BJ (cell line): ENCODE measurements at regions of chr2 and their contacts with region 1.

Region 1: DNA sequence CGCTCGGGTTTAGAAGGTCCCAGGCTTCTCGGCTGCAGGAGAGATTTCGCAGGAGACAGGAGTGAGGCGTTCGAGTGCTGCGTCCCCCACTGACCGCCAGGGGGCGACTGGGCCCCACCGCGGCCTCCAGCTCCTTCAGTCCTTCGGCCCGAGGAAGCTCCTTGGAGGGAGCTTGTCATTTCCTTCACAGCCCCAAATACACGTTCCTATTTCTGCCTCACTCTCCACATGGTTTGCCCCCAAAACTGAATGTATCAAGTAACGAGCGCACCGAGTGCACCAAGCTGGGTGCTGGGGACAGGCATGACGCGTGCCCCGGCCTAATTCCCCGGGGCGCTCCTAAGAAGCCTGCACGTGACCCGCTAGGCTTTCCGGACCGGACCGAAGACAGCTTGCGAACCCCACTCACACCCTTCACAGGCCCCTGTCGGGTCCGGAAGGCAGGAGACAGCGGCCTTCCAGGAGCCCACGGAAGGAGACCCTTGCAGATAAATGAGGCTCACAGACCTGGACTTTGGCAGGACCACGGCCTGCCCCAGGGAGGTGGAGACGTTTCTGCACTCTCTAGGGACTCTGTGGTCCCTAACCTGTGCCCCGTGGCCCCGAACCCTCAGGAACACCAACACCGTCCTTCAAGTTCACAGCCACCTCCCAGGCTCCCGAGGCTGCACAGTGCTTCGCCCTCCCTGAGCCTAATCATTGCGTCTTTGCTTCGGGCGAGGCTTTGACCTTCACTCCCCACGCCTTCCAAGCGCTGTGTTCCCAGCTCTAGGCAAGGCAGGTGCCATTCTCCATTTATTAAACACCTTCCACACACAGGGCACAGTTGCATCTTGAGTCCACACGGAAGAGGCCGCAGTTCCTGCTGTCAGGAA is 13.0 kb upstream of the FAHD2A start:
- DNase-seq: no peak
- H3K4me3 ChIP-seq: no peak overlapping the region
- H3K27me3 ChIP-seq: no peaks in the 10 kb centered on the region; the same call in 1 of the 2 replicates
- CTCF ChIP-seq: peak; percentile 99

Region 2: GRCh38 chr2:95115418-95115817 is 274.1 kb before region 1 on chr2:
- CTCF ChIA-PET with region 1: no interaction called
- POLR2A ChIA-PET with region 1: no interaction called
- DNase-seq: peak; percentile 7
- H3K4me3 ChIP-seq: no peak overlapping the region
- H3K27me3 ChIP-seq: no peaks in the 10 kb centered on the region
- CTCF ChIP-seq: peak; percentile 86

Region 3: DNA sequence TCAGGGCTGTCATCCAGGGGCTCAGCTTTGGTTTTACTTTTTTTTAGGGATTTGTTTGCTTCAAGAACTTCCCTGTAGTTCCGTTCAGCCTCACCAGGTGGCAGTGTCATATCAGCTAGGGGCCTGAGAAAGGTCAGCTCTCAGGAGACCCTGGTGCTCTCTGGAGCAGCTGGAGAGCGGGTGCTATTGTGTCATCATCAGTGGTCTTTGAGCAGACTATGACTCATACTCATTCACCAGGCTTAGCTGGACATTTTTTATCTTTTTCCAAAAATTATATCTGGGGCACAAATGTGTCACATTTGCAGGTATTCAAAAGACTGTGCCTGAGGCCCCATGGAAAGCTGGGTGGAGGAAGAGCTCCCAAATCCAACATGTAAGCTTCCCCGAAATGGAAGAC is 157.8 kb before region 1 on chr2:
- CTCF ChIA-PET with region 1: interaction called, 28 read pairs
- POLR2A ChIA-PET with region 1: no interaction called
- DNase-seq: peak; percentile 31
- H3K4me3 ChIP-seq: no peak overlapping the region
- H3K27me3 ChIP-seq: 0 out of 2 replicates have a peak, but pooled peaks cover 2% of the 10 kb centered on the region
- CTCF ChIP-seq: peak; percentile 94

Region 4: GRCh38 chr2:95359031-95359430 is 30.5 kb before region 1 on chr2:
- CTCF ChIA-PET with region 1: interaction called, 11 read pairs
- POLR2A ChIA-PET with region 1: no interaction called
- DNase-seq: peak; percentile 33
- H3K4me3 ChIP-seq: no peak overlapping the region
- H3K27me3 ChIP-seq: no peaks in the 10 kb centered on the region
- CTCF ChIP-seq: no peak

Region 5: DNA sequence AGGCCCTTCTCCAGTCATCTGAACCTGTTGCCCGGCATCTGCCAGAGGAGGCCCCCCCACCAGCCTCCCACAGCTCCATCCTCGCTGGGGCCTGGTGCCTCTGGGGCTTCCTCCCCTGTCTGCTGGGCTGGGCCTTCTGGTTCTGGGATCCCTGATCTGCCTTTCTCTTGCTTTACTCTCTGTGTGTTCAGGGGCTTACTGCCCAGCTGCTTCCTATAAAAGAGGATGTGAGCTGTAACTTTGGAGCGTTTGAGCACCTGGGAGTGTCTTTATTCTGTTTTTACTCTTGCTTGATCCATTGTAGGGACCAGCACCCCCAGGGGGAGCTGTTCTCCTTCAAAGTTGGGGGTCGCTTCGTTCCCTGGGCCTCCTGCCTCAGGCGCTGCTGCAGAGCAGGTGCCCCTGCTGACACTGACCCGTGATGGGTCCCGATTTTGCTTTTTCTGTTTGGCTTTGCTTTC is 10.1 kb before region 1 on chr2:
- CTCF ChIA-PET with region 1: interaction called, 18 read pairs
- POLR2A ChIA-PET with region 1: no interaction called
- DNase-seq: no peak
- H3K4me3 ChIP-seq: no peak overlapping the region
- H3K27me3 ChIP-seq: no peaks in the 10 kb centered on the region
- CTCF ChIP-seq: peak; percentile 36

Region 6: GRCh38 chr2:95728878-95729596 is 339.6 kb after region 1 on chr2:
- CTCF ChIA-PET with region 1: interaction called, 41 read pairs
- POLR2A ChIA-PET with region 1: no interaction called
- DNase-seq: peak; percentile 55
- H3K4me3 ChIP-seq: no peak overlapping the region
- H3K27me3 ChIP-seq: no peaks in the 10 kb centered on the region; the same call in 1 of the 2 replicates
- CTCF ChIP-seq: peak; percentile 59